ENCODE measurements at regions of chr1 and their contacts with region 1.

Region 1: DNA sequence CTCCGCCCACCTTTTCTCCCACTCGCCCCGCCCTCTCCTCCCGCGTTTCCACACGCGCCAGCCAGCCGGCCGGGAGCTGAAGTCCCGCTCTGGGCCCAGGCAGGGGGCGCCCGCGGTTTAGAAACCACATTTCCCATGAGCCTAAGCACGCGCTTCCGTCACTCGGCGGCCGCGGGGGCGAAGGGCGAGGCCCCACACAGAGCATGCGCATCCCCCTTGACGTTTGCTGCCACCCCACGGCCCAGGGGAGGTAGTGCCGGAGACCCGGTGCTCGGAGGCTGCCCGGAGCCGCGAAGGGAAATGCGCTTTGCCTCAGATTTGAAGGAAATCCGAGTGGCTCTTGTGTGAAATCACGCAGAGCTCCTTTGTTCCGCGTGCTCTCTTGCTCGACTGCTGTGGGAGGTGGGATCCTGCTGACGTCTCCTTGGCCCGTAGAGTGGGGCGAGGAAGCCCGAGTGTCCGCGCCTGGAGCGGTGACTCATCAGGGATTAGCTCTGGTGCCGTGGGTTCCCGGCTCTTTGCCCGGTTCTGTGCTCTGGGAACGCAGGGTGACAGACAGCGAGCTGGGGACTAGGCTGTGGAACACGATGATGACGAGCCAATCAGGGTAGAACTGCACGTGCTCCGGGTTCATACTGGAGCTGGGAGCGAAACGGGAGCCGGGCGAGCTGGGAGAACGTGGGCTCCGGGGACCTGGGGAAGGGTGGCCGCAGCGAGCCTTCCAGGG is 407 bp upstream of the B3GALNT2 start:
- DNase-seq: peak; percentile 99
- H3K4me3 ChIP-seq: peak overlapping the region; percentile 93 to 96 (median 95)
- H3K27ac ChIP-seq: peak overlapping the region; percentile 97
- H3K4me1 ChIP-seq: peaks cover 4% of the 10 kb centered on the region
- H3K27me3 ChIP-seq: no peaks in the 10 kb centered on the region
- CTCF ChIP-seq: peak; percentile 65 to 88

Region 2: DNA sequence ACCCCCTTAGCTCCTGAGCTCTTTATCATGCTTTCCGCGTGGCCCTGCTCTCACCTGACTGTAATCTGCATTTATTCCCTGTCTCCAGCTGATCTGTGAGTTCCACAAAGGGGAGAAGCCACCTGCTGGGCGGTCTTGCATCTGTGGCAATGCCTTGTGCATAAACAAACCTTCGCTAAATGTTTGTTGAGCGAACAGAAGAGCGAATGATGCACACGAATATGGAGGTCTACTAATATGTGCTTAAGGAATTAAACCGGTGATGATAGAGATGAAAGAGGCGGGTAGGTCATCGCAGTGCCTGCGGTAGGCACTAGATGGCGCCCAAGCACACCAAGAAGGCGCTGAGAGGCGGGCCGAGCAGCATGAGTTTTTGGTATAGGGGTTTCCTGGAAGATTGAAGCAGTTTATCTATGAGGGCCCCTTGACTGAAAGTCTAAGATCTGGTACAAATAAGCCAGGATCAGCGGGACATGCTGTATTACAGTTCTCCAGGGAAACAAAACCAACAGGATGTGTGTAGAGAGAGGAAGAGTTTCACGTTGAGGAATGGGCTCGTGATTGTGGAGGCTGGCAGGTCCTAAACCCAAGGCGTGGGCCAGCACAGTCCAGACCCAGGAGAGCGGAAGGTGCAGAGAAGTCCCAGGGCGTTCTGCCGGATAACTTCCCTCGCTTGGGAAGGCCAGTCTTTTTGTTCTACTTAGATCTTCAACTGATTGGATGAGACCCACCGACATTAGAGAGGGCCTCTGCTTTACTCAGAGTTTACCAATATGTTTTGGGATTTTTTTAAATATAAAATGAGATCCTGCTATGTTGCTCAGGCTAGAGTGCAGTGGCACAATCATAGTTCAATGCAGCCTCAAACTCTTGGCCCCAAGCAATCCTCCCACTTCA is 410.7 kb before region 1 on chr1:
- CTCF ChIA-PET with region 1: no interaction called
- dilution Hi-C with region 1: no loop called
- in situ Hi-C with region 1: no loop called
- intact Hi-C with region 1: loop called (anchors 1 kb)
- DNase-seq: no peak
- H3K4me3 ChIP-seq: no peak overlapping the region
- H3K27ac ChIP-seq: no peak overlapping the region
- H3K4me1 ChIP-seq: no peaks in the 10 kb centered on the region
- H3K27me3 ChIP-seq: no peaks in the 10 kb centered on the region
- CTCF ChIP-seq: peak; percentile 90 to 92

Region 3: GRCh38 chr1:235430991-235431390 is 73.7 kb before region 1 on chr1:
- CTCF ChIA-PET with region 1: no interaction called
- dilution Hi-C with region 1: no loop called
- in situ Hi-C with region 1: no loop called
- intact Hi-C with region 1: no loop called
- DNase-seq: no peak
- H3K4me3 ChIP-seq: no peak overlapping the region
- H3K27ac ChIP-seq: no peak overlapping the region
- H3K4me1 ChIP-seq: no peaks in the 10 kb centered on the region
- H3K27me3 ChIP-seq: no peaks in the 10 kb centered on the region
- CTCF ChIP-seq: no peak

Region 4: GRCh38 chr1:235468970-235469369 is 35.7 kb before region 1 on chr1:
- CTCF ChIA-PET with region 1: interaction called, 7 read pairs
- dilution Hi-C with region 1: no loop called
- in situ Hi-C with region 1: no loop called
- intact Hi-C with region 1: loop called (anchors 2 kb)
- DNase-seq: peak; percentile 63
- H3K4me3 ChIP-seq: no peak overlapping the region
- H3K27ac ChIP-seq: peak overlapping the region; percentile 50
- H3K4me1 ChIP-seq: no peaks in the 10 kb centered on the region
- H3K27me3 ChIP-seq: no peaks in the 10 kb centered on the region
- CTCF ChIP-seq: peak; percentile 39 to 52

Region 5: GRCh38 chr1:235670157-235670776 is 165.6 kb after region 1 on chr1:
- CTCF ChIA-PET with region 1: no interaction called
- dilution Hi-C with region 1: no loop called
- in situ Hi-C with region 1: no loop called
- intact Hi-C with region 1: no loop called
- DNase-seq: no peak
- H3K4me3 ChIP-seq: no peak overlapping the region
- H3K27ac ChIP-seq: no peak overlapping the region
- H3K4me1 ChIP-seq: no peaks in the 10 kb centered on the region
- H3K27me3 ChIP-seq: no peaks in the 10 kb centered on the region
- CTCF ChIP-seq: no peak

Region 6: GRCh38 chr1:235739124-235739523 is 234.5 kb after region 1 on chr1:
- CTCF ChIA-PET with region 1: no interaction called
- dilution Hi-C with region 1: no loop called
- in situ Hi-C with region 1: loop called in 1 of 2 experiments (anchors 25 kb)
- intact Hi-C with region 1: no loop called
- DNase-seq: peak; percentile 17
- H3K4me3 ChIP-seq: no peak overlapping the region
- H3K27ac ChIP-seq: no peak overlapping the region
- H3K4me1 ChIP-seq: peaks cover 8% of the 10 kb centered on the region
- H3K27me3 ChIP-seq: no peaks in the 10 kb centered on the region
- CTCF ChIP-seq: no peak

Region 7: GRCh38 chr1:235783148-235783776 is 278.6 kb after region 1 on chr1:
- CTCF ChIA-PET with region 1: no interaction called
- dilution Hi-C with region 1: no loop called
- in situ Hi-C with region 1: loop called in 1 of 2 experiments (anchors 25 kb)
- intact Hi-C with region 1: no loop called
- DNase-seq: peak; percentile 21
- H3K4me3 ChIP-seq: no peak overlapping the region
- H3K27ac ChIP-seq: no peak overlapping the region
- H3K4me1 ChIP-seq: peaks cover 4% of the 10 kb centered on the region
- H3K27me3 ChIP-seq: no peaks in the 10 kb centered on the region
- CTCF ChIP-seq: peak; percentile 21 to 42

Measured in mammary epithelial cell (primary cell).